ENCODE measurements at regions of chr12 and their contacts with region 1.

Region 1: GRCh38 chr12:49662998-49663843 is 39.9 kb downstream of the PRPF40B start:
- DNase-seq: peak; percentile 84
- ATAC-seq: peak; percentile 89
- H3K4me3 ChIP-seq: peak overlapping the region; percentile 0 to 65 (median 36)
- H3K4me3 Mint-ChIP-seq: peak overlapping the region; percentile 85
- H3K27ac ChIP-seq: peak overlapping the region; percentile 78 to 95
- H3K27ac Mint-ChIP-seq: peak overlapping the region; percentile 97
- H3K4me1 ChIP-seq: peaks cover 77 to 86% of the 10 kb centered on the region in 2 donors
- H3K4me1 Mint-ChIP-seq: peaks cover 82% of the 10 kb centered on the region
- H3K27me3 ChIP-seq: no peaks in the 10 kb centered on the region
- H3K27me3 Mint-ChIP-seq: no peaks in the 10 kb centered on the region
- CTCF ChIP-seq: no peak

Region 2: DNA sequence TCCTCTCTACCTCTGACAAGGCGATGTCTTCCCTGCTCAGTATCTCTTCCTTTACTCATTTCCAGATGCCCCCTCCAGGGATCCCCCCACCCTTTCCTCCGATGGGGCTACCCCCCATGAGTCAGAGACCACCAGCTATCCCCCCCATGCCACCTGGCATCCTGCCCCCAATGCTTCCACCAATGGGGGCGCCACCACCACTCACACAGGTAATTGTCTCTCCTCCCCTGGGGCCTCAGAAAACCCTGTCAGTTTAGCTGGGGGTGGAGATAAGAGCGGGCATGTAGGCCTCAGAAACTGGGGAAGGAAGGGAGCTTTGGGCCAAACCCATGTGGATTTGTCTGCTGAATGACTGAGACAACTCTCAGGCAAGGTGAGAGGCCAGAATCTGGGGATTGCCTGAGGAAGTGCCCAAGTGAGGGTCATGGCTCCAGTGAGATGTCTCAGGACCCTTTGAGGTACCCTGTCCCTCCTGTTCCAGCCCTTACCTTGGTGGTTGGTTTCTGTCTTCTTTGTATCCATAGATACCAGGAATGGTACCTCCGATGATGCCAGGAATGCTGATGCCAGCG is 31.8 kb before region 1 on chr12:
- CTCF ChIA-PET with region 1: interaction called, 6 read pairs
- POLR2A ChIA-PET with region 1: interaction called, 11 read pairs
- intact Hi-C with region 1: no loop called
- DNase-seq: no peak
- ATAC-seq: no peak
- H3K4me3 ChIP-seq: no peak overlapping the region
- H3K4me3 Mint-ChIP-seq: no peak overlapping the region
- H3K27ac ChIP-seq: no peak overlapping the region
- H3K27ac Mint-ChIP-seq: no peak overlapping the region
- H3K4me1 ChIP-seq: peaks cover 0 to 2% of the 10 kb centered on the region in 2 donors
- H3K4me1 Mint-ChIP-seq: peaks cover under 1% of the 10 kb centered on the region
- H3K27me3 ChIP-seq: no peaks in the 10 kb centered on the region
- H3K27me3 Mint-ChIP-seq: no peaks in the 10 kb centered on the region
- CTCF ChIP-seq: no peak

Measured in B cell (primary cell).